Dorsolateral prefrontal cortex (tissue), 120 donors: ENCODE measurements at regions of chrX and their contacts with region 1.

Region 1: GRCh38 chrX:130594453-130594916 is 192.7 kb downstream of the RBMX2 start:
- DNase-seq: peak in 2 of 10 donors; percentile 30 to 37
- H3K4me3 ChIP-seq: no peak overlapping the region
- H3K27ac ChIP-seq: peak overlapping the region in 38 of 59 donors; percentile 3 to 82 (median 61)
- H3K27me3 ChIP-seq: peaks cover 0 to 43% (median 5%) of the 10 kb centered on the region in 45 donors
- CTCF ChIP-seq: no peak

Region 2: GRCh38 chrX:130896802-130897501 is 302.5 kb after region 1 on chrX:
- intact Hi-C with region 1: loop called in 1 of 2 experiments (anchors 5 kb)
- DNase-seq: peak in 1 of 10 donors; percentile 10
- H3K4me3 ChIP-seq: peak overlapping the region in 3 of 59 donors; percentile 17 to 27 (median 26)
- H3K27ac ChIP-seq: peak overlapping the region in 58 of 59 donors; percentile 40 to 92 (median 82)
- H3K27me3 ChIP-seq: peaks cover 0 to 49% (median 10%) of the 10 kb centered on the region in 45 donors
- CTCF ChIP-seq: no peak